BJ (cell line): ENCODE measurements at regions of chr3 and their contacts with region 1.

Region 1: GRCh38 chr3:99319961-99320360 is 318.4 kb upstream of the COL8A1 start:
- DNase-seq: peak; percentile 86
- H3K4me3 ChIP-seq: no peak overlapping the region
- H3K27me3 ChIP-seq: no peaks in the 10 kb centered on the region
- CTCF ChIP-seq: no peak

Region 2: DNA sequence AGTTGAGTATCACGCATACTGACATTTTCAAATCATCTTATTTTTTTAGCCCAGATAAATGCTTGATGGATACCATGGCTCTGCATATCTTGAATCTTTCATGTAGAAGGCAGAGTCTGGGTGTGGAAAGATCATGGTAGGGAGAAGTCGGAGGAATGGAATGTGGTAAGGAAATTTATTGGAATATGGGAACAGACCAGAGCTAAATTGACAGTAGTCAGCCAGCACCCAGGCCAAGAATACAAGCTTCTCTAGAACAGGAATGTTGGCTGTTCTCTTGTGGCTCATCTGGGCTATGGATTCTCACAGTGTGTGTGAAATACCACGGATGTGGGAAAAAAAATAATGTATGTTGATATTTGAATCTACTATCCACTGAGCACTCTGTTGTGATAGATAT is 12.8 kb after region 1 on chr3:
- CTCF ChIA-PET with region 1: no interaction called
- POLR2A ChIA-PET with region 1: interaction called, 11 read pairs
- DNase-seq: no peak
- H3K4me3 ChIP-seq: no peak overlapping the region
- H3K27me3 ChIP-seq: no peaks in the 10 kb centered on the region; the same call in 1 of the 2 replicates
- CTCF ChIP-seq: no peak

Region 3: GRCh38 chr3:99484871-99485270 is 164.9 kb after region 1 on chr3:
- CTCF ChIA-PET with region 1: no interaction called
- POLR2A ChIA-PET with region 1: no interaction called
- DNase-seq: no peak
- H3K4me3 ChIP-seq: no peak overlapping the region
- H3K27me3 ChIP-seq: no peaks in the 10 kb centered on the region
- CTCF ChIP-seq: no peak